ENCODE measurements at regions of chr1 and their contacts with region 1.

Region 1: GRCh38 chr1:55284852-55285251 is 69.7 kb upstream of the USP24 start:
- DNase-seq: peak in 2 of 9 experiments; percentile 14 to 34
- ATAC-seq: no peak
- H3K4me3 ChIP-seq: no peak overlapping the region
- H3K4me3 Mint-ChIP-seq: no peak overlapping the region
- H3K27ac ChIP-seq: no peak overlapping the region
- H3K27ac Mint-ChIP-seq: no peak overlapping the region
- H3K4me1 ChIP-seq: no peaks in the 10 kb centered on the region
- H3K4me1 Mint-ChIP-seq: no peaks in the 10 kb centered on the region
- H3K27me3 ChIP-seq: no peaks in the 10 kb centered on the region
- H3K27me3 Mint-ChIP-seq: no peaks in the 10 kb centered on the region
- CTCF ChIP-seq: no peak

Region 2: DNA sequence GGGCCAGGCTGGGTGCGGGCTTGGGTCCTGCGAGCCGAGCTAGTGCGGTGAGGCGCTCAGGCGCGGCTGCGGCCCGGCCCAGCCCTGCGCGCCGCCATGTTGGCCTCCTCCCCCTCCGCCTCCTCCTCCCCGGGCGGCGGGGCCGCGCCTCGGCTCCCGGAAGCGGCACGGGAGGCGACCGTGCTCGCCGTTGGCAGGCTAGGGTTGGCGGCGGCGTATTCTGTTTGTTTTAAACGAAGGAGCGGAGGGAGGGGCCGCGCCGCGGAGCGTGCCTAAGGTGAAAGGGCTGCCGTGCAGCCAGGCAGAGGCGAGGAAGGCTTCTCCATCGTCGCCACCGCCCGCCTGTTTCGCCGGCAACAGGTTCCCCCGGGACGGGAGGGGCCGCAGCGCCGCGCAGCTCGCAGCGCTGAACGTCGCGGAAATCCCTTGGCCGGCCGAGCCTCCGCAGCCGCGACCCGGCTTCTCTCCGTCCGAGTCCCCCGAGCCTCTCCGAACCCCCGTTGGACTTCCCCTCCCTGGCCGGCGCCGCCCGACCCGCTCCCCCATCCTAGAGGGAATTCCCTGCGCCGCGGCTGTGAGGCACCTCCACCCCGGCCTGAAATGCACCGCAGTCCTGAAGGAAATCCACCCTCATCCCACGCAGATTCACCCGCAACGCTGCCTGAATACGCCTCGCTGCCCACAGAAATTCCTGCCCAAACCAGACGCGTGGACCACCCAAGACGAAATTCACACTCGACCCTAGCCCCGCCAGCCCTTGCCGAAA is 69.4 kb before region 1 on chr1 and contains the start of gene USP24:
- CTCF ChIA-PET with region 1: no interaction called
- POLR2A ChIA-PET with region 1: no interaction called
- intact Hi-C with region 1: no loop called
- DNase-seq: peak; percentile 60 to 93 (median 82)
- ATAC-seq: peak; percentile 76
- H3K4me3 ChIP-seq: peak within 1 kb of the TSS; percentile 76 to 83
- H3K4me3 Mint-ChIP-seq: peak within 1 kb of the TSS; percentile 97
- H3K27ac ChIP-seq: peak within 1 kb of the TSS; percentile 81 to 92
- H3K27ac Mint-ChIP-seq: peak within 1 kb of the TSS; percentile 98
- H3K4me1 ChIP-seq: peaks cover 45% of the 10 kb centered on the region
- H3K4me1 Mint-ChIP-seq: peaks cover 68% of the 10 kb centered on the region
- H3K27me3 ChIP-seq: no peaks in the 10 kb centered on the region
- H3K27me3 Mint-ChIP-seq: no peaks in the 10 kb centered on the region
- CTCF ChIP-seq: no peak
- total RNA-seq, gene USP24: 74.0 to 79.6 TPM

Region 3: DNA sequence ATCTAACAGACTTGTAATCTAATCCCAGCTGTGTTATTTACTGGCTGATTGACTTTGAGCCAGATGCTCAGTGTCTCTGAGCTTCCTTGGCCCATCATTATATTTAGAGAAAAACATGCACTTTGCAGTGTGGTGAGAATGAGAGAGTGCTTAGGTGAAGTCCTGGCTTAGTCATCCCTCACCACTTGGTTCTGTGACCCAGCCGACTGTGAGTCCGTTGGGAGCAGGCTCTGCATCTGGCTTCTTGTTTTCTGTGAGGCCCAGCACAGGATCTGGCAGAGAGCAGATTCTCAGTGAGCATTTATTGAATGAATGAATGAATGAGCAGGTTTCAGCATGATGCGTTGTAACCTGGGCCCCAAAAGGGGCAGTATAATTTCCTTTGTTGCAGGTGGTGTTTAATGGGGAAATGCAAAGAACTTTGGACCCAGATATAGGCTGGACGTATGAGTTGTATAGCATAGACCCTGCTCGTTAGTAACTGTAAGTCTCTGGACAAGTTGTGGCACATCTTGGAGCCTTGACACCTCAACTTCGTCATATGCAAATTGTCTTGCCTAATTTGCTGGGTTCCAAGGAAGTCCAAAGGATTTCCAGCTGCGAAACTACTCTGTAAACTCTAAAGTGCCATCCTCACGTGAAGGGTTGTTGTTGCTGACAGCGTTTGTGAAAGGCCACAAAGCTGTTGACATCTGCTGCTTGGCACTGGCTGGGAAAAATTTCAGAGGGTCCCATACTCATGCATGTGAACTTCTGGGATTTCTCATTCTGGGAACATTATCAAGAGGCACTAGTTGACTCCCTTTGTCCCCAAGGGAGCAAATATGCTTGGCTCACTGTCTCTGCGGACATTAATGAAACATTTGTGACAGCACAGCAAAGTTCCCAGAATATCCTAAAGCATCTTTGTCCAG is 69.1 kb after region 1 on chr1:
- CTCF ChIA-PET with region 1: no interaction called
- POLR2A ChIA-PET with region 1: no interaction called
- intact Hi-C with region 1: no loop called
- DNase-seq: no peak
- ATAC-seq: no peak
- H3K4me3 ChIP-seq: no peak overlapping the region
- H3K4me3 Mint-ChIP-seq: no peak overlapping the region
- H3K27ac ChIP-seq: no peak overlapping the region
- H3K27ac Mint-ChIP-seq: no peak overlapping the region
- H3K4me1 ChIP-seq: no peaks in the 10 kb centered on the region
- H3K4me1 Mint-ChIP-seq: no peaks in the 10 kb centered on the region
- H3K27me3 ChIP-seq: no peaks in the 10 kb centered on the region
- H3K27me3 Mint-ChIP-seq: peaks cover 8% of the 10 kb centered on the region
- CTCF ChIP-seq: no peak

Region 4: DNA sequence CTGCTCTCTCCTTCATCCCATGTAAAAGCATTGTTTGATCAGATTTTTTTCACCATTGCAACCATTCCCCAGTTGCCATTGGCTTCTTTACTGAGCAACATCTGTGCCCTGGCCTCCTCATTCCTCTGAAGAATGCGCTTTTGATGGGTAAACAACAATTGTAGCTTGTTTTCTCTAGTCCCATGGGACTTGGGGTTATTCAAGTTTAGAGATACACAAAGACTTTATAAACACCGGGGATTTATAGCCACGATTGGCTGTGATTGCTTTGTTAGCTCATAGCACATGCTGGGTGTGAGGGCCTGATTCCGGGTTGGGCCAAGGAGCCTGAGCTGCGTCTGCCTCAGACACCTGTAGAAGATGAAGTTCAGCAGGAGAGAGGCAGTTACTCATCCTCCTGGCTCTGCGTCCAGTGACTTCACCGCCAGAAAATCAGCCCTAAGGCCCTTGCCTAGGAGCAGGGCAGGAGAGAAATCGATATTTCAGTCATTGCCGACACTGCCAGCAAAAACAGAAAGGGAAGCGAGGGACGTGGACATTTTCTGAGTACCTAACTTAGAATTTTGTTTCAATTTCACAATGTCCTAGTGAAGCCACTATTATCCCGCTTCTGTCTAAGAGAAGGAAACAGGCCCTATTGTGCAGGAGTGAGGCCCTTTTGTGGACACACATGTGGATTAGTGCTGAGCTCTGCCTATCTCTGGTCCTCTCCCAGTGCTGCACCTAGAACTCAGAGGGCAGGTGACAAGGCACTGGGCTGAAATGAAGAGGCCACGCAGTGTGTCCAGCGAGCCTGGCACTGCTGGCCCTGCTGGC is 90.2 kb after region 1 on chr1:
- CTCF ChIA-PET with region 1: no interaction called
- POLR2A ChIA-PET with region 1: no interaction called
- intact Hi-C with region 1: no loop called
- DNase-seq: no peak
- ATAC-seq: no peak
- H3K4me3 ChIP-seq: no peak overlapping the region
- H3K4me3 Mint-ChIP-seq: no peak overlapping the region
- H3K27ac ChIP-seq: no peak overlapping the region
- H3K27ac Mint-ChIP-seq: no peak overlapping the region
- H3K4me1 ChIP-seq: no peaks in the 10 kb centered on the region
- H3K4me1 Mint-ChIP-seq: peaks cover 5% of the 10 kb centered on the region
- H3K27me3 ChIP-seq: no peaks in the 10 kb centered on the region
- H3K27me3 Mint-ChIP-seq: no peaks in the 10 kb centered on the region
- CTCF ChIP-seq: no peak

Region 5: DNA sequence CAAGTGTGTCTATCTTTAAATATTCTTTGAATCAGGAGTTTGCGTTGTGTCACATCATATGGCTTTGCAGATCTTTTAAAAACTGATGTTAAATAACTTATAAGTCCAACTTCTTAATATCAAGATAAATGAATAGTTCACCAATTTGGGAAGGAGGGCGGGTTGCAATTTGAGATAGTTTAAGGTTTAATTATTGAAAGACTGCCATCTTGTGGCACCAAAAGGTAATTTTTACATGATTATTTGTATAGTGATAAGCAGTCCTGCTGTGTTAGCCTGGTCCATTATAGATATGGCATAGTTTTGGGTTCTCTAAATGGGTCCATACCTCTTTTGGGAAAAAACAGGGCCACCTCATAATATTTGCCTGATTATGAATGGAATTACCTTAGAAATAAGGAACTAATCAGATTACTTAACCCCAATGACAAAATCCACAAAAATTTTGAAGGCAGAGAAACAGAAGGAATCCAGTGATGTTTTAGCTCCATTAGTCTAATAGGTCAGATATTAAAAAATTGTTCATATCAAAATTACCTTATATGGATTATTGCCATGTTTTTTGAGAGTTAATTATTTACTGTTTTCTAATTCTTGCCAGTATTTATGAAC is 1424.5 kb after region 1 on chr1:
- CTCF ChIA-PET with region 1: no interaction called
- POLR2A ChIA-PET with region 1: no interaction called
- intact Hi-C with region 1: loop called (anchors 2 to 10 kb)
- DNase-seq: peak in 2 of 9 experiments; percentile 26 to 42
- ATAC-seq: no peak
- H3K4me3 ChIP-seq: no peak overlapping the region
- H3K4me3 Mint-ChIP-seq: no peak overlapping the region
- H3K27ac ChIP-seq: no peak overlapping the region
- H3K27ac Mint-ChIP-seq: no peak overlapping the region
- H3K4me1 ChIP-seq: no peaks in the 10 kb centered on the region
- H3K4me1 Mint-ChIP-seq: no peaks in the 10 kb centered on the region
- H3K27me3 ChIP-seq: no peaks in the 10 kb centered on the region
- H3K27me3 Mint-ChIP-seq: peaks cover 14% of the 10 kb centered on the region
- CTCF ChIP-seq: peak; percentile 54

Measured in CD8-positive, alpha-beta T cell (primary cell).